ENCODE measurements at regions of chr20 and their contacts with region 1.

Region 1: DNA sequence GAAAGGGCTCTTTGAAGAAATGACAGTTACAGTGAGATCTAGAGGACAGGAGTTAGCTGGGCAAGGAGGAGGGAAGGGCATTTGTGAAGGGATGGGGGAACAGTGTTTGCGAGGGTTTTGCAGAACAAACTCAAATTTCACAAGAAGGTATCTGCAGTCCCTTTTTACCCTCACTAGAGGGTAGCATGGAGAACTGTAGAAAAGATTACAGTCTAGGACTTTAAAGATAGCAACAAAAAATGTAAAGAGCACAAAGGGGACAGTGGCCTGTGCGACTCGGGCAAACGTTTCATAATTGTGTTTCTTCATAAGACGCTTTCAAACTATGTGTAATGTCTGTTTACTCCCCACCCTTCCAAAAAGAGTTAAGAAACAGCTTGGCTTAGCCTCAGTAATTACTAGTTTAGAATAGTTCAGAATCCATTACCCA is 21.2 kb upstream of the ASXL1 start:
- DNase-seq: no peak
- CTCF ChIP-seq: peak; percentile 65

Region 2: GRCh38 chr20:31390490-31390889 is 946.4 kb before region 1 on chr20 and contains the start of gene DEFB119:
- CTCF ChIA-PET with region 1: no interaction called
- POLR2A ChIA-PET with region 1: no interaction called
- DNase-seq: no peak
- CTCF ChIP-seq: no peak

Region 3: GRCh38 chr20:32125506-32125905 is 211.4 kb before region 1 on chr20:
- CTCF ChIA-PET with region 1: no interaction called
- POLR2A ChIA-PET with region 1: no interaction called
- DNase-seq: no peak
- CTCF ChIP-seq: no peak

Region 4: GRCh38 chr20:32358883-32359632 is 22.1 kb after region 1 on chr20:
- CTCF ChIA-PET with region 1: interaction called, 29 read pairs
- POLR2A ChIA-PET with region 1: no interaction called
- DNase-seq: peak; percentile 82
- CTCF ChIP-seq: no peak